ENCODE measurements at regions of chr3 and their contacts with region 1.

Region 1: DNA sequence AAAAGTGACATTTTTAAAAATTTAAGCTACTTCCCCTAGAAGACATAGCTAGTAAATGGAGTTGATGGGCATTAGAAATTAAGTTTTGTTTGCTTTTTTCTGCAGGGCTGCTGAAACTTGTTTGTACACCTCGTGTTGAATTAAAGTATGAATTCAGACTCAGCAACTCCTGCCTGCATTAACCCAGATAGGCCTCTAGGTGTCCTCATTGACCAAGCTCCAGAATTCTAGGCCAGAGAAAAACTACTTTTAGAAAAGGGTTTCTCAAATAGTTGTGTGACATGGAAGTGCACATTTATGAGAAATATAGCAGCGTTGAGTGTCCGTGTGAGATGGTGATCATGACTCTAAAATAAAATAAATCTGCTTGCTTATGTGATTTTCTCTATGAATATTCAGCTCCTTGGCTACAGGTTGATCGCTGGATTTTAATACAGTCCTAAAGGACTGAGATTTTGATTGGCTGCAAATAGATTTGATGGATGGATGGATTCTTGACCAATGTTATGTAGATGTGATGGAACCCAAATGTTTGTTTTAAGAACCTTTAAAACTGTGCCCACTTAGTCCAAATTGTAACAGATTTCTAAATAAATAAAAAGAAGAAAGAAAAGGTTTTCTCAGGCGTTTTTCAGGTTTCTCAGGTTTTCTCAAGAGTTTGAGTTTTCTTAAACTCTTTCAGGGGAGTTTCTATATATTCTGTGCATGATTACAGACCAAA is 39.4 kb upstream of the LMOD3 start:
- DNase-seq: peak; percentile 41
- ATAC-seq: peak; percentile 83
- H3K4me3 Mint-ChIP-seq: no peak overlapping the region
- H3K27ac Mint-ChIP-seq: no peak overlapping the region
- H3K4me1 Mint-ChIP-seq: peaks cover 18% of the 10 kb centered on the region
- H3K27me3 Mint-ChIP-seq: no peaks in the 10 kb centered on the region
- CTCF ChIP-seq: peak; percentile 94

Region 2: GRCh38 chr3:68972358-68972979 is 189.3 kb before region 1 on chr3:
- CTCF ChIA-PET with region 1: no interaction called
- POLR2A ChIA-PET with region 1: no interaction called
- intact Hi-C with region 1: no loop called
- DNase-seq: peak; percentile 71
- ATAC-seq: peak; percentile 75
- H3K4me3 Mint-ChIP-seq: no peak overlapping the region
- H3K27ac Mint-ChIP-seq: no peak overlapping the region
- H3K4me1 Mint-ChIP-seq: no peaks in the 10 kb centered on the region
- H3K27me3 Mint-ChIP-seq: peaks cover 3% of the 10 kb centered on the region
- CTCF ChIP-seq: peak; percentile 65

Region 3: DNA sequence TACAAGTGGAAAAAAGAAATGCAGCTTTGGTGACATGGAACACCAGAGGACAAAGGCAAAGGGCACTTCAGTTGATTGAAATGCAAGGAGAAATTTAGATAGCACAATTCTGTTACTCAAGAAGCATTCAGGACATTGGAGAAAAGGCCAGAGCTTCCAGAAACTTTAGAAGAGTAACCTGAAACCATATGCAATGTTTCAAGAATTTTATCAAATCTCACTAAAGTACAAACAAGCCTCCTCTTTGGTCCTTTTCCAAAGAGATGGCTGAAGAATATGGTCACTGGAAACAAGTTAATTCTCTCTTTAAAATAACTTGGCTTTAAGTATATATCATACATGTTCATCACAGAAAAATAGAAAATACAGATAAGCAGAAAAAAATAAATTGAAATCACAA is 24.7 kb before region 1 on chr3:
- CTCF ChIA-PET with region 1: interaction called, 11 read pairs
- POLR2A ChIA-PET with region 1: no interaction called
- intact Hi-C with region 1: no loop called
- DNase-seq: no peak
- ATAC-seq: no peak
- H3K4me3 Mint-ChIP-seq: no peak overlapping the region
- H3K27ac Mint-ChIP-seq: no peak overlapping the region
- H3K4me1 Mint-ChIP-seq: no peaks in the 10 kb centered on the region
- H3K27me3 Mint-ChIP-seq: peaks cover 3% of the 10 kb centered on the region
- CTCF ChIP-seq: no peak

Region 4: DNA sequence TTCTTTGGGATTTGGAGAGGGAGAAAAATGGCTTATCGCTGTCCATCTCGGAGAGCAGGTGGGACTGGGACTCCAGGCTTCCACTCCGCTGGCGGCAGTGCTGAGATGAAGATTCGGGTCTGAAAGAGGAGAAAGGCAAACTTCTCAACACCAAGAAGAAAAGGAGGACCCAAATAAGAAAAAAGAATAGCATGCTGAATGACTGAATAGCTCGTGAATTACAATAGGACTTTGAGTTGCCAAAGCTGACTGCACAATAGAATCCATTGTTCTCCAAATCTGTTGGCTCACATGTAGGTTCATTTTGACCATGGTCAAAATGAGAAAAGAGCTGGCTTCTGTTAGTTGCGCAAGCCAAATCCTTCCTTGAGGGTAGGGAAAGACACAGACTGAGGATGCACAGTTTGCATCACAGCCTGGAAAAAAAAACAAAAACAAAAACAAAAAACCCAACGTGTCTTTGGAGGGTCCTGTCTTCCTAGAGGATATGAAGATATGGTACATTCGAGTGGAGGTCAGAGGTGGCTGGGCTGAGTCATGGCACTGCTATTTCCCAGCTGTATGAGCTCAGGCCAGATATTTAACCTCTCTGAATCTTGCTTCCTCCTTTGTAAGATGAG is 20.0 kb after region 1 on chr3:
- CTCF ChIA-PET with region 1: interaction called, 29 read pairs
- POLR2A ChIA-PET with region 1: no interaction called
- intact Hi-C with region 1: no loop called
- DNase-seq: no peak
- ATAC-seq: no peak
- H3K4me3 Mint-ChIP-seq: no peak overlapping the region
- H3K27ac Mint-ChIP-seq: no peak overlapping the region
- H3K4me1 Mint-ChIP-seq: peaks cover 18% of the 10 kb centered on the region
- H3K27me3 Mint-ChIP-seq: no peaks in the 10 kb centered on the region
- CTCF ChIP-seq: no peak

Region 5: GRCh38 chr3:69236812-69237707 is 75.3 kb after region 1 on chr3:
- CTCF ChIA-PET with region 1: interaction called, 26 read pairs
- POLR2A ChIA-PET with region 1: interaction called, 3 read pairs
- intact Hi-C with region 1: no loop called
- DNase-seq: peak; percentile 18
- ATAC-seq: peak; percentile 51
- H3K4me3 Mint-ChIP-seq: no peak overlapping the region
- H3K27ac Mint-ChIP-seq: no peak overlapping the region
- H3K4me1 Mint-ChIP-seq: peaks cover 11% of the 10 kb centered on the region
- H3K27me3 Mint-ChIP-seq: no peaks in the 10 kb centered on the region
- CTCF ChIP-seq: no peak

Region 6: DNA sequence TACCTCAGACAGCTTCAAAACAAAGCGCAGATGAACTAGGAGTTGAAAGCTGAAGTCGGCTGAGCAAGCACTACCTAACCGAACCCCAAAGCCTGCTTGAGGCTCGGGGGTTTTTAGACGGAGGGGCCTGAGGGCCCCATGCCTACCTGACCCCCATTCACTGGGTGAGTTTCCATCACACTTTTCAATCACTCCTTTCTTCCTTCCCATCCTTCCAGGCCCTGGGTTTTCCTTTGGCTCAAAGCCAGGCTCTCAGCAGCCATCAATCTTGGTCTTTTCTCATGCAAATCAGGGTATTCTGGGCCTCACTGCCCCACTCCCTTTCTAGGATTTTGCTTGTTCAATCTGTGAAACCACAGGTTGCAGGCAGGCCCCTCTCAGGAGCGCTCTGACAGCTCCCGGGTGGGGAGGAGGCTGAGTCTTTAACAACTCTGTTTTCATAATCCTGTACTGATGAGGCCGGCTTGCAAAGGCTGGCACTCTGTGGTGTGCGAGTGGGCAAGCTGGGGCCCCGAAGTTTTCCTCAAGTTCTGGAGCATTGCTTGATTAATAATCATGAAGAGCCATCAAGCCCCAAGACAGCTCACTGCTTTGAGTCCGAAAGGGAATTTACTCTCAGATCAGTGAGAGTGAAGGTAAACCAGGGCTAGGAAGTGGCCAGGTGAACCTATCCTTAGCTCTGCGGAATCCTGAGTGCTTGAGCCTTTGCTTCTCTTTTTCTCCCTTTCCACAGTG is 126.6 kb after region 1 on chr3:
- CTCF ChIA-PET with region 1: interaction called, 35 read pairs
- POLR2A ChIA-PET with region 1: no interaction called
- intact Hi-C with region 1: no loop called
- DNase-seq: peak; percentile 69
- ATAC-seq: peak; percentile 92
- H3K4me3 Mint-ChIP-seq: no peak overlapping the region
- H3K27ac Mint-ChIP-seq: peak overlapping the region; percentile 71
- H3K4me1 Mint-ChIP-seq: peaks cover 20% of the 10 kb centered on the region
- H3K27me3 Mint-ChIP-seq: no peaks in the 10 kb centered on the region
- CTCF ChIP-seq: no peak

Region 7: DNA sequence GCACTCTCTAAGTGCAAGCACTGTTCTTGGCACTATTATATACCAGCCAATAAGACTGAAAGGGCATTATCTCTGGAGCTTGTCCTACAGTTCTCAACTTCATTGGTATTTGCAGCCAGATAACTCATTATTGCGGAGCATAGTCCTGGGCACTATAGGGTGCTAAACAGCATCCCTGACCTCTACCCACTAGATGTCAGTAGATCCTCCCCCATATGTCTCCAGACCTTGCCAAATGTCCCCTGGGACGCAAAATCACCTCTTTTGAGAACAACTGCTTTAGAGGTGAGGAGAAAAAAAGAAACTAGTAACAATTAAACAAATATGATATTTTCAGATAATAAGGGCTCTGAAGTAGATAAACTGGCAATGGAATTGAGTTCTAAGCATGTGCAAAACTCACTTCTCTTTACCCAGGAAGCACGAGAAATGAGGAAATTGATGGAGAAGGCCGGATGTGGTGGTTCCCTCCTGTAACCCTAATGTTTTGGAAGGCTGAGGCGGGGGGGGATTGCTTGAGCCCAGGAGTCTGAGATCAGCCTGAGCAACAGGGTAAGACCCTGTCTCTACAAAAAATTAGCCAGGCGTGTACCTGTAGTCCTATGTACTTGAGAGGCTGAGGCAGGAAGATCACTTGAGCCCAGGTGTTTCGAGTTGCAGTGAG is 162.7 kb after region 1 on chr3:
- CTCF ChIA-PET with region 1: interaction called, 60 read pairs
- POLR2A ChIA-PET with region 1: no interaction called
- intact Hi-C with region 1: no loop called
- DNase-seq: peak; percentile 37
- ATAC-seq: peak; percentile 43
- H3K4me3 Mint-ChIP-seq: no peak overlapping the region
- H3K27ac Mint-ChIP-seq: peak overlapping the region; percentile 43
- H3K4me1 Mint-ChIP-seq: peaks cover 50% of the 10 kb centered on the region
- H3K27me3 Mint-ChIP-seq: no peaks in the 10 kb centered on the region
- CTCF ChIP-seq: peak; percentile 31

Region 8: DNA sequence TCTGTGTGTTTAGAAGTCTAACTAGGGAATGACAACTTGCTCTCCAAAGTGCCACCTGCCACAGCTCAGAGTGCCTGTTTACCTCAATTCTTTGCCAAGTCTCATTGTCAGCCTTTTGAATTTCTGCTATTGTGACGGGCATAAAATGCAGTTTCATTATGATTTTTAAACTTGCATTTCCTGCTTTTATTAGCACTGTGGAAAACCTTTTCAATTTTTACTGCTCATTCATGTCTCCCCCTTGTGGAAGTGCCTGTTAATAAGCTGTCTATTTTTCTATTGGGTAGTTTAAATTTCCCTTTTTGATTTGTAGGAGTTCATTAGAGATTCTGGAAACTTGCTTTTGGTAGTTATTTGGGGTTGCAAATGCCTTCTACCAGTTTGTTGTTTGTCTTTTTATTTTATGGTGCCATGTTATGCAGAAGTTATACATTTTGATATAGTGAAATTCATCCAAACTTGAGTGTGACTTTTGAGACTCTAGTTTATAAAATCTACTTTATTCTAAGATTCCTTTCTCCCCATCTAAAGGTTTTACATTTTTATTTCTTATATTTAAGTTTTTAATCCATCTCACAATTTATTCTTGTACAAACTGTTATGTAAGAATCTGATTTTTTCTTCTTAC is 278.0 kb after region 1 on chr3:
- CTCF ChIA-PET with region 1: interaction called, 12 read pairs
- POLR2A ChIA-PET with region 1: no interaction called
- intact Hi-C with region 1: no loop called
- DNase-seq: no peak
- ATAC-seq: no peak
- H3K4me3 Mint-ChIP-seq: no peak overlapping the region
- H3K27ac Mint-ChIP-seq: no peak overlapping the region
- H3K4me1 Mint-ChIP-seq: peaks cover 20% of the 10 kb centered on the region
- H3K27me3 Mint-ChIP-seq: peaks cover 6% of the 10 kb centered on the region
- CTCF ChIP-seq: peak; percentile 63

Measured in activated CD8-positive, alpha-beta T cell treated with anti-CD3 and anti-CD28 coated beads for 36 hours (primary cell).